ENCODE measurements at regions of chr3 and their contacts with region 1.

Region 1: DNA sequence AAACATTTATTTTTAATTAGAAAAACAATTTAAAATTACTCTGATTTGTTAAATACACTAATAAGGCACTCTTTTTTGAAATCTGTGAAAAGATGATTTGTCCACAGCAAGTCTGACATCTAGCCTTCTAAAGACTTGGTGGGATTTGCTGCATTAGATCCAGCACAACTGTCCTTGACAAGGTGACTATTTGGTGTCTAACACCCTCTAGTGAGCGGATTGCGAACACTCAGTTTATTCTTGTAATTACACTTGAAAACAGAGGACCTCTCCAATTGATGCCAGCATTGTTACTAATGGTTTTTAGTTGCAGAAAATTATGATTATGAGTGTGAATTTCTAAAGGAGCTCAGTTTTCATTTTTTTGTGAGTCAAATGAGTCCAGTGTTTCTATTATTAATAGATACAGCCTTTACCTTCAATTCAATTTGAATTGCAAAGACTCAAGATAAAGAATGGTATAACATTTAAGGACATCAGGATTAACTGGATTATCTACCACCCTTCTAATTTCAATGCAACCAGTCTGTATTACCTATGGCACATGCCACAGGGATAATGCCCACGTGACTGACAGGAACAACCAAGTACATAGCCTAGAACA is 29.7 kb upstream of the STRIT1 start:
- DNase-seq: no peak
- ATAC-seq: peak; percentile 79

Region 2: DNA sequence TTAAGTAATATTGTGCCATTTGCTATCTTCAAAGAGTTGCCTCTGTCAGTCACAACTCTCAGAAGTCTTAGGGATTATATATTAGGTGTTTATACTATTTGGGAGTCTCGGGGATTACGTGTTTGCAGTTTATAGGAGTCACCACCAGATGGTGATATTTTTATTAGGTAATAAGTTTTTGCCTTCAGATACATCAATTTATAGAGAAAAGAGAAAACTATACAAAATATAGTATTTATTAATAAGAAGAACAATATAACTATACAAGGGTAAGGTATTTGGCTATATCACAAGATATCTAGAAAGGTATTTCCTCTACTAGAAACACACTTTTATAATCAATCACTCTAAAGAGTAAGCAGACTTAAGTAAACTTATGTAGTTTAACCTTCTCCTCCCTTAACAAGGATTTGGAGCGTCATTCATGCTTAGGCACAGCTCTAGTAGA is 988.2 kb before region 1 on chr3:
- intact Hi-C with region 1: loop called (anchors 5 kb)
- DNase-seq: no peak
- ATAC-seq: no peak

Region 3: DNA sequence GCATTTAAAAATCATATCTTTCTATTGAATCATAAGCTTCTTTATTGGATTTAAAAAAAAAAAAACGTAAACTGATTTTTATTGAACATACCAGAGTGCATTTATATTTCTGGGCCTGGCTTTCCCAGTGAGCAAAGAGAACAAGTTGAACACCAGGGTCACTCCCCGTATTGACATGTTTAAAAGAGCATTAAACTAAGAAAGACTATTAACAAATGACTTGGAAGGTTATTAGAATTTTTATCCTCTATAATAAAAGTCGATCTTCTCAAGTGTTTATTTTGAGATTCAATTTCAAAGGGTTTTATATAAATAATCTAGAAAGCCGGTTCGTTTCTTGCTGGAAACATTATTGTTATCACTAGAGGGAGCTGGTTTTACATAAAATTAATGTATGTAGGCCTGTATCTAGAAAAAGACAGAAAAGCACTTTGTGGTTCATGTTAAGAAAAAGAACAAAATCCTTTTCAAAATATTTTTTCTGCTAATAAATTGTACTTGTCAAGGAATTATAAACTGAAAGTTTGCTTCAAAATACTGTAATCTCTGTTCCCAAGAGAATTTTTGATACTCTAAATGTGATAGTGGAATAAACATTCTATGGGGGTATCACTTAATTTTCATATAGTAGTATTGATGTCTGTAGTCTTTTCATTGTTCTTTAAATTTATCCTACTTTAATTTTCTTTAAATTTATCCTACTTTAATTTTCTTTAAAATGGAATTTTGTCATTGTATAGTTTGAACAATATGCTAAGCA is 564.9 kb before region 1 on chr3:
- intact Hi-C with region 1: loop called (anchors 2 kb)
- DNase-seq: no peak
- ATAC-seq: no peak

Region 4: GRCh38 chr3:154779571-154779970 is 543.6 kb before region 1 on chr3:
- intact Hi-C with region 1: no loop called
- DNase-seq: no peak
- ATAC-seq: no peak